Left cardiac atrium (tissue), 4 donors: ENCODE measurements at regions of chr1 and their contacts with region 1.

Region 1: GRCh38 chr1:109404838-109405237 is 7.1 kb upstream of the SORT1 start:
- DNase-seq: no peak
- ATAC-seq: no peak

Region 2: GRCh38 chr1:109277434-109278204 is 127.2 kb before region 1 on chr1:
- intact Hi-C with region 1: loop called in 1 of 2 experiments (anchors 5 kb)
- DNase-seq: peak; percentile 80
- ATAC-seq: peak; percentile 64 to 75

Region 3: DNA sequence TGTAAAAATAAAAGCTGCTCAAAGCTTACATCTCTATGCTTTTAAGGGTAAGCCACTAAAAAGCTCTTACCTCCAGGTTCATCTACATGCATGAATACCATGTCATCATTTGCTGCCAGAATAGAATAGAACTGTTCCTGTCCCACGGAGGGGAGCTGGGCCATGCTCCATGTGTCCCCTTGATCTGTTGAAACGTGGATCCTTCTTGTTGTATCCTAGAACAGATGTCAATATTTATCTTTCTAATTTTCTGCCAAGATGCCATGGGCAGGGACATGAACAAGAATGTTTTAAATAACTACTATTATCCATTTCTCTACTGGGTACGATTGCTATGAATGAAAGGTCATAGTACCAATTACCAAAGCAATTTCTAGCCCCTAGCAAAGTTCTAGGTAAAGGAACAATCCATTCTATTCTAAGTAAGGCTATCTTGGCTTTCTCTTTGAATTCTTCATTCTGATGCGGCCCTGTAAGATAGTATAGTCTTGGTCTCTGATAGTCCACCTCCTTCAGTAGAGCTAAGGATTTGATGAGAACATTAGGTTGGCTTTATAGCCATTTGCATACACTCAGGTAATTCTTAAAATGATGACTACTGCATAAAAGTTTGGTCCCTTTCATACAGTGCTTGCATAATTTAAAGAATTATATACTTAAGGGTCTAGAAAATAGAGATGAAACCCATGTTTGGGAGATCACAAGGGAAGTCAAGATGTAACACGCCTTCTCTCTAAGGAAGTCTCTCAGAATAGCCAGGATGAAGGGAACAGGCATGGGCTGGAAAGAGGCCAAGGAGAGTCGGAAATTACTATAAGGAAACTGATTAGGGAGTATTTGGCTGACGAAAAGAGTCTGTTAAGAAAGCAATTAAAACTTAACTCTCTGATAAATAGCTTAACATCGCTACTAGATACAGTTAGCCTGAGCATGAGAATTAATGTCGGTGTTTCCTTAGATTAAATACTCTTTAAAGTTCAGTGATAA is 62.6 kb before region 1 on chr1:
- intact Hi-C with region 1: loop called in 1 of 2 experiments (anchors 10 kb)
- DNase-seq: no peak
- ATAC-seq: no peak